Activated CD4-positive, alpha-beta memory T cell treated with anti-CD3 and anti-CD28 coated beads for 36 hours (primary cell): ENCODE measurements at regions of chr2 and their contacts with region 1.

Region 1: DNA sequence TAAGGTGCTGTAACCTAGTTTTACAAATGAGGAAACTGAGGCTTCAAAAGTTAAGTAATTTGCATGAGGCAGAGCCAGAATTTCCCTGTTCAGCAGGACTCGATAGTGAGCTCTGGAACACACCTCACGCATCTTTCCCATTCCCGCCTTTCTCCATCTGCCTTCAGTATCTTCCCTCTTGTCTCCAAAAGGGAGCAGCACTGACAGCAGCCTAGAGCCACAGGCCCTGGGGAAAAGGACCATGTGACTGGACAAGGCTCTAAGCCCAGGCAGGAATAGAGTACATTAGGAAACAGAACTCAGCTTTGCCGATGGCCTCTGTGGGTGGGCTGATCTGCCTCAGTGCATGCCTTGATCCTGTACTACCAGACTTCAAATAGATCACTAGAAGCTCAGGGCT is 21.5 kb downstream of the GPR155 start:
- DNase-seq: no peak
- H3K4me3 Mint-ChIP-seq: no peak overlapping the region
- H3K27ac Mint-ChIP-seq: no peak overlapping the region
- H3K4me1 Mint-ChIP-seq: no peaks in the 10 kb centered on the region
- H3K27me3 Mint-ChIP-seq: no peaks in the 10 kb centered on the region

Region 2: DNA sequence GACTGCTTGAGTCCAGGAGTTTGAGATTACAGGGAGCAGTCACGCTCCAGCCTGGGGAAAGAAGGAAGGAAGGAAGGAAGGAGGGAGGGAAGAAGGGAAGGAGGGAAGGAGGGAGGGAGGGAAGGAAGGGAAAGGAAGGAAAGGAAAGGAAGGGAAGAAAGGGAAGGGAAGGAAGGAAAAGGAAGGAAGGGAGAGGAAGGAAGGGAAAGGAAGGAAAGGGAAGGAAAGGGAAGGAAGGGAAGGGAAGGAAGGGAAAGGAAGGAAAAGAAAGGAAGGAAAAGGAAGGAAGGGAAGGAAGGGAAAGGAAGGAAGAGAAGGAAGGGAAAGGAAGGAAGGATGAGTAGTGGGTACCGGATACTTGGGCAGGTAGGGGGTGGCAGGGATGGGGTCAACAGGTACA is 10.8 kb before region 1 on chr2:
- CTCF ChIA-PET with region 1: interaction called, 11 read pairs
- POLR2A ChIA-PET with region 1: no interaction called
- intact Hi-C with region 1: no loop called
- DNase-seq: no peak
- H3K4me3 Mint-ChIP-seq: no peak overlapping the region
- H3K27ac Mint-ChIP-seq: no peak overlapping the region
- H3K4me1 Mint-ChIP-seq: peaks cover 7% of the 10 kb centered on the region
- H3K27me3 Mint-ChIP-seq: no peaks in the 10 kb centered on the region

Region 3: DNA sequence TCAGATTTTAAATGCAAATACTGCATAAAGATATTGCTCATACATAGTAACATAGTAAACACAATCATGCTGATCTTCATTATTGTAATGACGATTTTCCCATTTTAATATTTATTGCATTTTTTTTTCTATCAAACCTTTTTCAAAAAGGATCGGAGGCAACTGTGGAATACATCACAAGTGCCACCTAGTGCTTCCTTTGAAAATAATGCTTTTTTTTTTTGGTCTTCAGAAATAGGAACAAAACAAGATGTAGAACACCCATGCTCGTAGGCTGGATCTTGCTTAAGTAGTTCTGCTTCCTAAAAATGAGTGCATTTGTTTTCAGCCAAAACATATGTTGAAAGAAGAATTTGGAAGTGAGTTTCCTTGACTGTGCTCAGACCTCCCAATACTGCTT is 57.2 kb after region 1 on chr2:
- CTCF ChIA-PET with region 1: interaction called, 51 read pairs
- POLR2A ChIA-PET with region 1: no interaction called
- intact Hi-C with region 1: loop called (anchors 1 kb)
- DNase-seq: no peak
- H3K4me3 Mint-ChIP-seq: no peak overlapping the region
- H3K27ac Mint-ChIP-seq: no peak overlapping the region
- H3K4me1 Mint-ChIP-seq: peaks cover 7% of the 10 kb centered on the region
- H3K27me3 Mint-ChIP-seq: no peaks in the 10 kb centered on the region

Region 4: GRCh38 chr2:174553811-174554493 is 88.6 kb after region 1 on chr2:
- CTCF ChIA-PET with region 1: interaction called, 159 read pairs
- POLR2A ChIA-PET with region 1: no interaction called
- intact Hi-C with region 1: no loop called
- DNase-seq: no peak
- H3K4me3 Mint-ChIP-seq: no peak overlapping the region
- H3K27ac Mint-ChIP-seq: peak overlapping the region; percentile 80
- H3K4me1 Mint-ChIP-seq: peaks cover 42% of the 10 kb centered on the region
- H3K27me3 Mint-ChIP-seq: no peaks in the 10 kb centered on the region

Region 5: DNA sequence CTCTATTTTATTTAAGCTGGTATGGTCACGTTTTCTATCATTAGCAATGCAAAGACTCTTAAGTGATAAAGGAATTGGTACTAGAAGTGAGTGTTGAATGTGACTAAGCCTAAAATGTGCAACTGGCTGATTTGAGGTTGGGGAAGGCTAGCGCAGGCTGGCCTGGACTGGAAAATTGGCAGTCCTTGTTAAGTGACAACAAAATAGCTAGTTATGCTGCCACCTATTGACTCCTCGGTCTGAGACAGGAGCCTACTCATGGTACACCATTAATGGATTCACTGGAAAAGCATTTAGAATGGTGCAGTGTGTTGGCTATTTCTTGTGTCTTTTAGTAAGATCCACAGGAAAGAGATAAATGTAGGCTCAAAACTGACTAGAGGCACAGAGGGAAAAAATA is 138.0 kb after region 1 on chr2:
- CTCF ChIA-PET with region 1: interaction called, 36 read pairs
- POLR2A ChIA-PET with region 1: no interaction called
- intact Hi-C with region 1: loop called (anchors 1 kb)
- DNase-seq: peak; percentile 80
- H3K4me3 Mint-ChIP-seq: no peak overlapping the region
- H3K27ac Mint-ChIP-seq: peak overlapping the region; percentile 85
- H3K4me1 Mint-ChIP-seq: peaks cover 85% of the 10 kb centered on the region
- H3K27me3 Mint-ChIP-seq: no peaks in the 10 kb centered on the region

Region 6: GRCh38 chr2:174697255-174697654 is 231.9 kb after region 1 on chr2:
- CTCF ChIA-PET with region 1: interaction called, 60 read pairs
- POLR2A ChIA-PET with region 1: no interaction called
- intact Hi-C with region 1: no loop called
- DNase-seq: peak; percentile 78
- H3K4me3 Mint-ChIP-seq: no peak overlapping the region
- H3K27ac Mint-ChIP-seq: no peak overlapping the region
- H3K4me1 Mint-ChIP-seq: no peaks in the 10 kb centered on the region
- H3K27me3 Mint-ChIP-seq: no peaks in the 10 kb centered on the region

Region 7: DNA sequence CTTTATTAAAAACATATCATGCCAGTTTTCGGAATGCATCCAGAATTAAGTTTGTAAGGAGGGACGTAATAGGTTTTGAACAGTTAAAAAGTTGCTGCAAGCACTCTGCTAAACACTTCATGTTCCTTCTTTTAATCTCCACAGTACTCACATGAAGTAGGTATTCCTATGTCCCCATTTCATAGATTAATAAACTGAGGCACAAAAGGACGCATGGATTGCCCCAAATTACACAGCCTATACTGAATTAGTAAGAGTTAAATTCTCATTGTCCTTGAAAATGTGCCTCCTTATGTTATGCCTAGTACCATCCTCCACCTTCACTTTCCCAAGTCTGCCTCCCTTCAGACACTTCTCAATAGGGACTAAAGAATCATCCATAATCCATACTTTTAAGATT is 1075.1 kb after region 1 on chr2:
- CTCF ChIA-PET with region 1: no interaction called
- POLR2A ChIA-PET with region 1: no interaction called
- intact Hi-C with region 1: no loop called
- DNase-seq: no peak
- H3K4me3 Mint-ChIP-seq: no peak overlapping the region
- H3K27ac Mint-ChIP-seq: no peak overlapping the region
- H3K4me1 Mint-ChIP-seq: no peaks in the 10 kb centered on the region
- H3K27me3 Mint-ChIP-seq: no peaks in the 10 kb centered on the region